AG04450 (cell line): ENCODE measurements at regions of chr18 and their contacts with region 1.

Region 1: DNA sequence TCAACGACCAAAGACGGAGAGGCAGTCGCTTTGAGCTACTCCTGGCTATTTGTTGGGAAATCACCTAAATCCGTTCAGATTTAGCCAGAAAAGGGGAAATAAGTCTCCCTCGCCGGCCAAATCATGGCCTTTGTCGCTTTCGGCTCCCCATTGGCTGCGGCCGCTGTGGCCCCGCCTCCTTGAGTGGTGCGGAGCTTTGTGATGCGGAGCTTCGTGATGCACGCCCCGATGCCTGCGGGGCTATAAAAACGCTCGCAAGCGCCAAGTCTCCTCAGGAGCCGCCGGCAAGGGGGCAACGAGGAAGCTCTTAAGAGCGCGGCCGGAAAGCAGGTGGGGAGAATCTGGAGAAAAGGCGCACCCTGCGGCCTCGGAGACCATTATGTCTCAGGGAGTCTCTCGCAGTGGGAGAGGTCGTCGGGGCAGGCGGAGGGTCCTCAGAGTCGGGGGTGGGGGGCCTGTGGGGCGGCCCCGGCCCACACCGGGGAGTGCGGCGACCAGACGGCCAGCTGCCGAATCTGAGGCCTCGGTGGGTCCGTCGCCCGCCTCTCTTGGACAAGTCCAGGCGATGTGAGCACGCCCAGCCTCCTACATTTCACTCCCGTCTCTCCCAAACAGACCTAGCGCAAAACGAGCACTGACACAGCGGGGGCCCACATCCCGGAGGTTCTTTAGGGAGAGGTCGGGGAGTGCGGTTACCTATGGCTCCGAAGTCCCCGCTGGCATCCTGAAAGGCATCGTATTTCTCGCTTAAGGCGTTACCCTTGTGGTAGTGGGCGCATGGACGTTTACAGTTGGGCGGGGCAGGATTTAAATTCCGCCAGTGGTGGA is at the start of gene CABYR:
- DNase-seq: peak; percentile 75
- H3K4me3 ChIP-seq: peak within 1 kb of the TSS; percentile 62
- H3K27ac ChIP-seq: peak within 1 kb of the TSS; percentile 57
- H3K27me3 ChIP-seq: no peaks in the 10 kb centered on the region
- CTCF ChIP-seq: no peak
- polyA plus RNA-seq, gene CABYR: 9.9 and 11.8 TPM in 2 replicates

Region 2: DNA sequence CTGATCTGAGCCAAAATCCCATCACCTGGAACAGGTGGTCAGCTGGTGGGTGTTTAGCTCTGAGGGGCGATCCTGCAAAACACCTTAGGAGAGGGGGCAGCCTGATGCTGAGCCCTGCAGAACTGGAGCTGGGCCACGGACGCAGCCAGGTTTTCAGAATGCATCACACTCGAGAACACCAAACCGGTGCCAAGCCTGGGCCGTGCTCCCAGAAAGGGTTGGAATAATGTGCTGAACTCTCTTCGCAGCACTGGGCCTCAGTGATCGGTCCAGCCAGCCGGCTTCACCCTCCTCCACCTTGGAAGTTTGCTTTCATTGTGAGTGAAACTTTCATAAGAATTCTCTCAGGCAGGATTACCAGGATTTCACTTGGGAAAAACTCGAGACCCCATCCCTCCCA is 181.0 kb before region 1 on chr18:
- CTCF ChIA-PET with region 1: no interaction called
- POLR2A ChIA-PET with region 1: no interaction called
- DNase-seq: no peak
- H3K4me3 ChIP-seq: no peak overlapping the region
- H3K27ac ChIP-seq: no peak overlapping the region
- H3K27me3 ChIP-seq: peaks cover 27% of the 10 kb centered on the region
- CTCF ChIP-seq: no peak

Region 3: DNA sequence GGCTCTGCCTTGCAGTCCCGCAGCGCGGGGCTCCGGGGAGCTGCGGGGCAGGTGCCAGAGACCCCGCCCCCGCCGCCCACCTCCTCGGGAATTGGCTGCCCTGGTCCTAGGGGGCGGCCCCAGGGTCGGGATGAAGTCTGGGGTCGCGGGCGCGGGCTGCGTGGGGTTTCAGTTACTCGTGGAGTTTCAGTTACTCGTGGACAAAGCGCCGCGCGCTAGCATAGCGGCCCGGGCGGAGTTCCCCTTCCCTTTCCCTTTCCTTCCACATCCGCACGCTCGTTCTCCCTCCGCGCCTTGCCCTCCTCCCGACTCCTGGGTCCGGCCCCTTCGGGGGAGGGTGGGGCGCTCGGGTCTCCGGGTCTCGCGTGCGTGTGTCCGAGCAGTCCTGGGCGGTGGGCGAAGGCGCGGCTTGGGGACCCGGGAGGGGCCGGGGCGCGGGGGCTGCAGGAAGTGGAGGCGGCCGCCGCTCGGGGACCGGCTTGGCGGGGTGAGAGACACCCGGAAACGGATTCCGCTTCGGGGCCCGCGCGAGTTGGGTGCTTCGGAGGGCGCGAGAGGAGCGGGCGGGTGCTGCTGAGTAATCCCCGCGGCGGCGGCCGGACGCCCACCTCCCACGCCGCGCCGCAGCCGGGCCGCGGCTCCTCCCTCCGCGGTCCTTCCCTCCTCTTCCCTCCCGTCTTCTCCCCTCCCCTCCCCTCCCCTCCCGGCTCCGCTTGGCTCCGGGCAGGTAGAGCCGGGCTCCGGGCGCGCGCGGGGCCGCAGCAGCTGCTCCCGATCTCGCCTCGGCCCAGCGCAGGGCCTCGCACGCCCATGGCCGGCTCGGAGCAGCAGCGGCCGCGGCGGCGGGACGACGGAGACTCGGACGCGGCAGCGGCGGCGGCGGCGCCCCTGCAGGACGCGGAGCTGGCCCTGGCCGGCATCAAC is 124.7 kb before region 1 on chr18 and contains the start of gene TTC39C:
- CTCF ChIA-PET with region 1: no interaction called
- POLR2A ChIA-PET with region 1: interaction called, 10 read pairs
- DNase-seq: no peak
- H3K4me3 ChIP-seq: peak within 1 kb of the TSS; percentile 87
- H3K27ac ChIP-seq: peak within 1 kb of the TSS; percentile 90
- H3K27me3 ChIP-seq: peaks cover 13% of the 10 kb centered on the region
- CTCF ChIP-seq: no peak
- polyA plus RNA-seq, gene TTC39C: 18.6 and 24.3 TPM in 2 replicates

Region 4: DNA sequence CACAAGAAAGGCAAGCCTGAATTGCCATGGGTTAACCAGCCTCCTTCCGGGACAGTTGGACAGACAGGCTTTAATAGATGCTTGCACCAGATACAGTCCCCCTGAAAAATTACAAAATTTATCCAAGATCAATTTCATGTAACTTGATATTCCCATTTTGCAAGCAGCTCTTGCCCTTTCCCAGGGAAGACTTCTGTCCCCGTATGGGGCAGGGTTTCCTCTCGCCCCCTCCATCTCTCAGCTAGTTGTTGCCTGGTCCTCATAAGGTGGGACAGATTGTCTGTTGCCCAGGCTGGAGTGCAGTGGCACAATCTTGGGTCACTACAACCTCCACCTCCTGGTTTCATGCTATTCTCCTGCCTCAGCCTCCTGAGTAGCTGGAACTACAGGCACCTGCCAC is 63.3 kb before region 1 on chr18:
- CTCF ChIA-PET with region 1: no interaction called
- POLR2A ChIA-PET with region 1: interaction called, 10 read pairs
- DNase-seq: no peak
- H3K4me3 ChIP-seq: no peak overlapping the region
- H3K27ac ChIP-seq: peak overlapping the region; percentile 49
- H3K27me3 ChIP-seq: no peaks in the 10 kb centered on the region
- CTCF ChIP-seq: no peak

Region 5: DNA sequence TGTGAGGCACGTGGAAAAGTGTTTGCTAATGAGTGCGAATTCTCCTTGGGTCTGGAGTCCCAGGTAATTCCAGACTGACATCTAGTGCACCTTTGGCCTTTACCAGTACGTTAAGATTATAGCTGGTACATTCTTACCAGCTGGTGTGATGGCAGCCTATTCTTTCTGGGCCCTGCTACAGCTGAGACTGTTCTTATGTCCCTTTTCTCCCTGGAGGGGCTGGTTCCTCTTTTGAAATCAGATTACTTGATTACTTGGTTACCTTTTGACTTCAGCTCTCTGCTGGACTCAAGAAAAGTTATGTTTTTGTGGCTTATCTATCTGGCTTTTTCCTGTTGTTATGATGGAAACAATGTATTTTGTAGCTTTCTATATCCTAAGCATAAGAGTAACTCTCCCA is 14.4 kb after region 1 on chr18:
- CTCF ChIA-PET with region 1: interaction called, 6 read pairs
- POLR2A ChIA-PET with region 1: interaction called, 29 read pairs
- DNase-seq: no peak
- H3K4me3 ChIP-seq: no peak overlapping the region
- H3K27ac ChIP-seq: no peak overlapping the region
- H3K27me3 ChIP-seq: no peaks in the 10 kb centered on the region
- CTCF ChIP-seq: no peak

Region 6: GRCh38 chr18:24271381-24272331 is 132.7 kb after region 1 on chr18:
- CTCF ChIA-PET with region 1: no interaction called
- POLR2A ChIA-PET with region 1: interaction called, 12 read pairs
- DNase-seq: no peak
- H3K4me3 ChIP-seq: peak overlapping the region; percentile 82
- H3K27ac ChIP-seq: peak overlapping the region; percentile 66
- H3K27me3 ChIP-seq: no peaks in the 10 kb centered on the region
- CTCF ChIP-seq: 0 out of 2 replicates have a peak, but pooled peaks have one; percentile 28

Region 7: GRCh38 chr18:24397694-24398365 is 258.8 kb after region 1 on chr18 and contains the start of gene OSBPL1A:
- CTCF ChIA-PET with region 1: no interaction called
- POLR2A ChIA-PET with region 1: interaction called, 15 read pairs
- DNase-seq: peak; percentile 59
- H3K4me3 ChIP-seq: peak within 1 kb of the TSS; percentile 84
- H3K27ac ChIP-seq: peak within 1 kb of the TSS; percentile 52
- H3K27me3 ChIP-seq: no peaks in the 10 kb centered on the region
- CTCF ChIP-seq: no peak
- polyA plus RNA-seq, gene OSBPL1A: 41.0 and 56.1 TPM in 2 replicates